WTC11 (cell line): ENCODE measurements at regions of chr14 and their contacts with region 1.

Region 1: GRCh38 chr14:70907176-70907995 is at the start of gene PCNX1:
- DNase-seq: peak; percentile 91
- ATAC-seq: peak; percentile 95
- H3K4me3 Mint-ChIP-seq: peak within 1 kb of the TSS; percentile 71
- H3K27ac Mint-ChIP-seq: peak within 1 kb of the TSS; percentile 82
- H3K4me1 Mint-ChIP-seq: peaks cover 43% of the 10 kb centered on the region
- H3K27me3 Mint-ChIP-seq: no peaks in the 10 kb centered on the region; the same call in 1 of the 2 replicates
- CTCF ChIP-seq: peak; percentile 50
- total RNA-seq, gene PCNX1: 43.4 to 49.8 TPM (median 46.4 TPM) in 3 replicates

Region 2: DNA sequence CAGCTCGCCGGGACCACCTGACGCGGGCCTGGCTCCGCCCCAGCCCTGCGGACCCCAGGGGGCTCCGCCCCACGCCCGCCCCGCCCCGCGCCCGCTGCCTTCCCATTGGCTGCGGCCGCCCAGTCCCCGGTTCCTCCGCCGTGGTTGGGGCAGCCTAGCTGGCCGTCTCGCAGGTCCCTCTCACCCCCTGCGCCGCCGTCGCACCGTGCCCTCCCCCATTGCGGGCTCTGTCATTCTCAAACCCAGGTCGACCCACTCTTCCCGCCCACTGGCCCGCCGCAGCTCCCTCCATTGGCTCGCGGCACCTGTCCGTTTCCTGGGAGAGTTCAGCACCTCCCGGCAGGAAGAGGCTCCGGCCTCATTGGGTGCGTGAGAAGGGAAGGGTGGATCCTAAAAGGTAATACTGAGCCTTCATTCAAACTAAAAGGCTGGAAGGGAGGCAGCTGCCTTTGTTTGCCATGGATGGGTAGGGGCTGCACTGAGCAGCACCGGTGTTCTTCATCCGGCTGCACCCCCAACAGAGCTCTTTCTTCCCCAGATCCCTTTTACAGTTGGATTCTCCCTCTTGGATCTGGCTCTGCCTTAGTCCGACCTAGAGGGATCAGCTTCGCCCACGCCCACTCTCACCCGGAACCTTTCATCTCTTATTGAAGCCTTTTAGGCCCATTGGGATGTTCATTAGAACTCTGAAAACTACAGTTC is 97.7 kb before region 1 on chr14:
- CTCF ChIA-PET with region 1: interaction called, 18 read pairs
- POLR2A ChIA-PET with region 1: interaction called, 3 read pairs
- DNase-seq: peak; percentile 100
- ATAC-seq: peak; percentile 94
- H3K4me3 Mint-ChIP-seq: no peak overlapping the region
- H3K27ac Mint-ChIP-seq: peak overlapping the region; percentile 96
- H3K4me1 Mint-ChIP-seq: peaks cover 15% of the 10 kb centered on the region
- H3K27me3 Mint-ChIP-seq: no peaks in the 10 kb centered on the region
- CTCF ChIP-seq: no peak

Region 3: GRCh38 chr14:70833884-70834283 is 73.5 kb before region 1 on chr14:
- CTCF ChIA-PET with region 1: no interaction called
- POLR2A ChIA-PET with region 1: no interaction called
- DNase-seq: no peak
- ATAC-seq: no peak
- H3K4me3 Mint-ChIP-seq: no peak overlapping the region
- H3K27ac Mint-ChIP-seq: no peak overlapping the region
- H3K4me1 Mint-ChIP-seq: no peaks in the 10 kb centered on the region
- H3K27me3 Mint-ChIP-seq: no peaks in the 10 kb centered on the region; the same call in 1 of the 2 replicates
- CTCF ChIP-seq: no peak

Region 4: DNA sequence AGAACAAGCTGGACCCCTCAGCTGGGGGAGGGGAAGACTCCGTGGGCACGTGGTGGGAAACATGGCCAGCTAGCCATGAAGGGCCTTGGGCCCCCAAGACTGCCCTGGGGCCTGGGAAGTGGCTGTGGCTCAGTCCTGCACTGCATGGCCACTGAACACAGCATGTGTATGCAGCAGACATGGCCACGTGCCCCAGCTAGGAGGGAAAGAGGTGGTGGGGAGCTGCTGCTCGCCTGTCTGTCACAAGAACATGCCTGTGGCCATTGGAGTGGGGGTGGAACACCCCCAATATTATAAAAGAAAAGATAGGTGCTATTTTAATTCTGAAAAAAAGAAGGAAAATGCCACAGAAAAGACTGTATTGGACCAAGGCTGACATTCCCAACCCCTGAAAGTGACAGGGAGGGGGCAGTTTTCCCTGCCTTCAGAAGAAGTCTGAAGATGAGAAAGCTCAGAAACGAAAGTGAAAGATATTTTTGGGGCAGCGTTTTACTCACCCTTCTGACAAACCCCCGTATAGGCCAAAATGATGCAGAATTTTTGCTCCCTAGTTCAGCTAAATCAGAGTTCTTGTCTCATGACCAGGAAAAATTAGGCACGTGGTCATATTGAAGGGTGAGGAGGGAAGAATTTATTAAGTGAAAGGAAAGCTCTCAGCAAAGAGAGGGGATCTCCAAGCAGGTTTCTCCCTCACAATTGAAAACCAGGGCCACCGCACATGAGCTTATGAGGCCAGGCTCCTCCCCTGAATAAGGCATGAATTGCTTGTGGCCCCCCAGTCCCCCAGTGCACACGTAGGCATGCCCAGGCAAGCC is 35.3 kb before region 1 on chr14:
- CTCF ChIA-PET with region 1: interaction called, 10 read pairs
- POLR2A ChIA-PET with region 1: no interaction called
- DNase-seq: no peak
- ATAC-seq: no peak
- H3K4me3 Mint-ChIP-seq: no peak overlapping the region
- H3K27ac Mint-ChIP-seq: no peak overlapping the region
- H3K4me1 Mint-ChIP-seq: peaks cover 12% of the 10 kb centered on the region
- H3K27me3 Mint-ChIP-seq: no peaks in the 10 kb centered on the region
- CTCF ChIP-seq: no peak

Region 5: GRCh38 chr14:70887207-70887681 is 20.1 kb before region 1 on chr14:
- CTCF ChIA-PET with region 1: interaction called, 13 read pairs
- POLR2A ChIA-PET with region 1: no interaction called
- DNase-seq: no peak
- ATAC-seq: no peak
- H3K4me3 Mint-ChIP-seq: no peak overlapping the region
- H3K27ac Mint-ChIP-seq: no peak overlapping the region
- H3K4me1 Mint-ChIP-seq: peaks cover 10% of the 10 kb centered on the region; the same call in 1 of the 2 replicates
- H3K27me3 Mint-ChIP-seq: peaks cover 3% of the 10 kb centered on the region; the same call in 1 of the 2 replicates
- CTCF ChIP-seq: no peak

Region 6: DNA sequence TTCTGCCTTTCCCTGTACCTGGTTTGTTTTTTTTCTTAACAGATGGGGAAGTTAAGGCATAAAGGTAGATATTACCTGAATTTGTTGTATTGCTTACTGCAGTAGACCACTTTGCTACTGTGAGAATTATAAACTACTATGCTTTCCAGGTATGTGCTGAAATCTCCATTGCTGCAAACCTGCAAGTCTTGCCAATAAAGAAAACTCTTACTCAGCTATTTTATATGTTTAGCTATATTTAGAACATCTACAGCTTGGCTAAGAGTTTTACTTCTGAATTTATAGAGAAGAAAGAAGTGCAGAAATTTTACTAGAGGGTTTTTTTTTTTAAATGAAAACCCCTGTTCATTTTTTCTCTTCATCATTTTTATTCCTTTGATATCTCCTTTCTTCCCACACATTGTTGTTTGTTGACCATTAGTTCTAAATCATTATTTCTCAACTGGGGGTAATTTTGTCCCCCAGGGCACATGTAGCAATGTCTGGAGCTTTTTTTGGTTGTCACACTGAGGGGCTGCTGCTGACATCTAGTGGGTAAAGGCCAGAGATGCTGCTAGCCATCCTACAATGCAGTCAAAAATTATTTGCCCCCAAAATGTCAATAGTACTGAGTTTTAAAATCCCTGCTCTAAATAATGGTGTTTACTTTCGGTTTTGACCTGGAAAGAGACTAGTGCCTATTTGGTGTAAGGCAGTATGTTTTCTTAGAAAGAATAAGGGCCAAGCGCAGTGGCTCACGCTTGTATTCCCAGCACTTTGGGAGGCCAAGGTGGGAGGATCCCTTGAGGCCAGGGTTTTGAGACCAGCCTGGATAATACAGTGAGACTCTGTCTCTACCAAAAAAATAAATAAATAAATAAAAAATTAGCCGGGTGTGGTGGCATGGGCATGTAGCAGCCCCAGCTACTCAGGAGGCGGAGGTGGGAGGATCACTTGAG is 48.4 kb after region 1 on chr14:
- CTCF ChIA-PET with region 1: interaction called, 31 read pairs
- POLR2A ChIA-PET with region 1: interaction called, 3 read pairs
- DNase-seq: no peak
- ATAC-seq: peak; percentile 51; the same call in 1 of the 2 replicates
- H3K4me3 Mint-ChIP-seq: no peak overlapping the region
- H3K27ac Mint-ChIP-seq: no peak overlapping the region
- H3K4me1 Mint-ChIP-seq: no peaks in the 10 kb centered on the region
- H3K27me3 Mint-ChIP-seq: no peaks in the 10 kb centered on the region
- CTCF ChIP-seq: no peak

Region 7: DNA sequence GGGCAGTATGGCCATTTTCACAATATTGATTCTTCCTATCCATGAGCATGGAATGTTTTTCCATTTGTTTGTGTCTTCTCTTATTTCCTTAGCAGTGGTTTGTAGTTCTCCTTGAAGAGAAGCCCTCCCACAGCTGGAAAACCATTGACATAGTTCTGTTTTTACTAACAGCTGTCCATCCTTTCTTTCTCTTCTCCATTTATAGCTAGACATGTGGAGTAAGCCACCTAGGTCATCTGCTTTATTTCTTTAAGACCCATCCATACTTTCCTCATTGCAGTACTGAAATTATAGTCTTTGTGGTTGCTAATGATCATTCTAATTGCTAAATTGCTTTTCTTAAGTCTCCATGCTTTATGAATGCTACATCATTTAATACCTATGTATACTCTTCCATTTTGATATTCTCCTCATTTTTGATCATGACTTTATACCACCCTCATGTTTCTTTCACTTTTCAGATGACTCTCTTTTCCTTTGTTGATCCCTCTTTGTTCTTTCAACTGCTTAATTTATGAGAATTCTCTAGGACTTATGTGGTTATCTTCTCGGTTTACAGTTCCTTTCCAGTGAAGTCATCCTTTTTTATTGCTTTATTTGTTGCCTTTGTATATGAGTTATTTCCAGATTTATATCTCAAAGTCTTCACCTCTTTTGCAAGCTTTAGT is 114.1 kb after region 1 on chr14:
- CTCF ChIA-PET with region 1: no interaction called
- POLR2A ChIA-PET with region 1: no interaction called
- DNase-seq: no peak
- ATAC-seq: no peak
- H3K4me3 Mint-ChIP-seq: no peak overlapping the region
- H3K27ac Mint-ChIP-seq: no peak overlapping the region
- H3K4me1 Mint-ChIP-seq: no peaks in the 10 kb centered on the region
- H3K27me3 Mint-ChIP-seq: no peaks in the 10 kb centered on the region
- CTCF ChIP-seq: no peak